Sigmoid colon (tissue), 7 donors: ENCODE measurements at regions of chr6 and their contacts with region 1.

Region 1: GRCh38 chr6:93663111-93663510 is 243.8 kb upstream of the EPHA7 start:
- DNase-seq: no peak
- H3K4me3 ChIP-seq: no peak overlapping the region
- H3K27ac ChIP-seq: no peak overlapping the region
- H3K4me1 ChIP-seq: no peaks in the 10 kb centered on the region
- H3K27me3 ChIP-seq: no peaks in the 10 kb centered on the region
- CTCF ChIP-seq: no peak
- EP300 ChIP-seq: no peak
- POLR2A ChIP-seq: no peak

Region 2: GRCh38 chr6:93644611-93645010 is 18.5 kb before region 1 on chr6:
- intact Hi-C with region 1: loop called (anchors 1 kb)
- DNase-seq: no peak
- H3K4me3 ChIP-seq: no peak overlapping the region
- H3K27ac ChIP-seq: no peak overlapping the region
- H3K4me1 ChIP-seq: no peaks in the 10 kb centered on the region
- H3K27me3 ChIP-seq: no peaks in the 10 kb centered on the region
- CTCF ChIP-seq: no peak
- EP300 ChIP-seq: no peak
- POLR2A ChIP-seq: no peak

Region 3: DNA sequence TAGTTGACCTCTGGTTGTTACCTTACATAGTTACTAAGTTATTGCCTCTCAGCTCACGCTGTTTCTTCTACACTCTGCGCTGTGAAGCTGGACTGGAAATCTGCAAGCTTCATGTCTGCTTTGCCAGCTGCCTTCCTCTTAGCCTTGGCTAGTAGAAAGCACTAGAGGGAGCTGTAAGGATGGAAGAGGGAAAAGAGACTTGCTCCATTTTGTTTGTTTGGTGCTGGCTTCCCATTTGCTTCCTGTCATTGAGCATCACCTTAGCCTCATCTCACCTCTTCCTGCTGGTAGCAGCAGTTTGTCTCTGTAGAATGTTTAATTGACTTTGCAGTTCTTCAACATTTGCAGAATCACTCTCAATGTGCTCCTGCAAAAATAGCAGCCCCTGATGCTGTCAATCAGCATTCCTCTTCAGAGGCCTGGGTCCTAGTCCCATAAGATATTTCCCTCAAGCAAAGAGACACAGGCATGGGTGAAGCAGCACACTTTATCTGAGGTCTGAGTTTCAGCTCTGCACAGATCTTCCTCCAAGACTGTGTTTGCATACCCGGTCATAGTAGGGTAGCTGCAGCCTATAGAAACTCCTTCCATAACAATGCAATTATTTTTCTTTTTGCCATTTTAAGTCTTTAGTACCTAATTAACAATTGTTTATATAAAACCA is 58.4 kb after region 1 on chr6:
- intact Hi-C with region 1: no loop called
- DNase-seq: no peak
- H3K4me3 ChIP-seq: no peak overlapping the region
- H3K27ac ChIP-seq: no peak overlapping the region
- H3K4me1 ChIP-seq: no peaks in the 10 kb centered on the region
- H3K27me3 ChIP-seq: no peaks in the 10 kb centered on the region
- CTCF ChIP-seq: peak in 2 of 4 experiments; percentile 12 to 21
- EP300 ChIP-seq: no peak
- POLR2A ChIP-seq: no peak